ENCODE measurements at regions of chr12 and their contacts with region 1.

Region 1: GRCh38 chr12:3202734-3203446 is 125.7 kb downstream of the TSPAN9 start:
- DNase-seq: peak; percentile 79
- H3K4me3 Mint-ChIP-seq: no peak overlapping the region
- H3K27ac Mint-ChIP-seq: no peak overlapping the region
- H3K4me1 Mint-ChIP-seq: peaks cover 9% of the 10 kb centered on the region
- H3K27me3 Mint-ChIP-seq: peaks cover 37% of the 10 kb centered on the region

Region 2: DNA sequence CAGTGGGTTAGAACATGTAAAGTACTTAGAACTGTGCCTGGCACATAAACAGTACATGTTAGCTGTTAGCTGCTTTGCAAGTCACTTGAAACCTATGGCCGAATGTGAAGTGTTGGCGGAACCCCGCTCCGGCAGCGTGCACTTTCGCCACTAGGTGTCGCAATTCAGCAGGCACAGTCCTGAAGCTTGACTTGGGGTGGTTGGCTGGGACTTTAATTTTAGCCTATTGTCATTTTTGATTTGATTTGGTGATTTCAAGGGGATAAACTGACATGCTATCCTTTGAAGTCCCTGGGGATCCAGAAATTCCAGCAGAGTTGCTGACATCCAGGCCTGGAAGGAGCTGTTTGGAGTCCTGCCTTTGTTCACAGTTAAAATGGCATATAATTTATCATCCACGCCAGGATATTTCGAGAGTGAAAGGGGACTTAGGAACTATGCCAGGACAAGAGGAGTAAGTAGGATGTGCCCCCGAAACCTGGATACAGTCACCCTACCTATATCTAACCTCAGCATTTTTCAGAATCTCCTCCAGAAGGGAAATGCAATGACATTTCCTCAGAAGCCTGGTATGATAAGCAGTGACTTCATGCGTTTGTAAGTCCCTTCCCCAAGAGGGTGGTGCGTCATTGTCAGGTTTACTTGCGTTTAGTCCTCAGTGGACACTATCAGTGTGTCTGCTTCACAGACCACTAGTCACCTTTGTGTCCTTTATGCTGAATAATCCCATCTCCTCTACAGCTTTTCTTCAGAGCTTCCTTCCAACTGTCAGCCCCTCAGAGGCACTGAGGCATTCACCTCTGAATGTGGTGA is 129.2 kb before region 1 on chr12:
- CTCF ChIA-PET with region 1: interaction called, 5 read pairs
- intact Hi-C with region 1: loop called (anchors 1 kb)
- DNase-seq: peak; percentile 91
- H3K4me3 Mint-ChIP-seq: no peak overlapping the region
- H3K27ac Mint-ChIP-seq: no peak overlapping the region
- H3K4me1 Mint-ChIP-seq: peaks cover 5% of the 10 kb centered on the region
- H3K27me3 Mint-ChIP-seq: peaks cover 11% of the 10 kb centered on the region

Region 3: GRCh38 chr12:3275171-3276041 is 72.5 kb after region 1 on chr12:
- CTCF ChIA-PET with region 1: interaction called, 8 read pairs
- intact Hi-C with region 1: loop called (anchors 2 kb)
- DNase-seq: peak; percentile 82
- H3K4me3 Mint-ChIP-seq: no peak overlapping the region
- H3K27ac Mint-ChIP-seq: no peak overlapping the region
- H3K4me1 Mint-ChIP-seq: no peaks in the 10 kb centered on the region
- H3K27me3 Mint-ChIP-seq: no peaks in the 10 kb centered on the region